ENCODE measurements at regions of chr4 and their contacts with region 1.

Region 1: DNA sequence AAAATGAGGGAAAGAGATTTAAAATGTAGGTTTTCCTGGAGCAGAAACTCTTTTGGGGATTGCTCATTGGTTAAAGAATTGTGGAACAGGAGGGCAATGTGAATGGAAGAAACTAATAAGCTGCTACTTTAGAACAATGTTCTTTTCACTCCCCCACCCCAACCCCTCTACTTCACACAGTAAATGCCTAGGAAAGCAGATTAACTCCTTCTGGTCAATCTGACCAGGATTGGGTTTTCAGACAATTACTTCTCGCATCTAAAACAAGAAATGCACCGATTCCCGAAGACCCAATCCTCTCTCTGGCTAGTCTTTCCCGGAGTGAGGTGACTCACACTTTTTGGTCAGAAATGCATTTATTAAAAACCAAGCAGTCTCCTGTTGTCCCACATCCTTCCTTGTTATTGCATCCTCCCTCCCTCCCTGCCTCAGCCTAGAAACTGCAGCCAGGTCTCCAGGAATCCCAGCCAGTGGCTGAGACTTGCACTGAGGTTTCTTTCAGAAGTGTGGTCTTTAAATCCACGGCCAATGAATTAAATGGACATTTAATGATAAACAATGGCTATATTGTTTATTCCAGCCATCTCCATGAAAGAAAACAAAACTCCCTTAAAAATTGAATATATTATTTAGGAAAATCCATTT is 21.4 kb downstream of the MFAP3L start:
- DNase-seq: no peak
- ATAC-seq: peak; percentile 48
- H3K4me3 ChIP-seq: no peak overlapping the region
- H3K27ac ChIP-seq: peak overlapping the region; percentile 46 to 49
- H3K4me1 ChIP-seq: peaks cover 0 to 20% of the 10 kb centered on the region in 2 donors
- H3K27me3 ChIP-seq: no peaks in the 10 kb centered on the region

Region 2: GRCh38 chr4:169963998-169964397 is 40.8 kb before region 1 on chr4:
- intact Hi-C with region 1: loop called in 1 of 2 experiments (anchors 2 kb)
- DNase-seq: no peak
- ATAC-seq: peak; percentile 48
- H3K4me3 ChIP-seq: no peak overlapping the region
- H3K27ac ChIP-seq: no peak overlapping the region
- H3K4me1 ChIP-seq: peaks cover 2 to 10% of the 10 kb centered on the region in 2 donors
- H3K27me3 ChIP-seq: no peaks in the 10 kb centered on the region

Region 3: GRCh38 chr4:170089668-170090351 is 85.0 kb after region 1 on chr4 and contains the start of gene AADAT:
- intact Hi-C with region 1: no loop called
- DNase-seq: peak; percentile 74 to 93
- ATAC-seq: peak; percentile 95
- H3K4me3 ChIP-seq: peak within 1 kb of the TSS; percentile 75 to 96
- H3K27ac ChIP-seq: peak within 1 kb of the TSS; percentile 23 to 66
- H3K4me1 ChIP-seq: no peaks in the 10 kb centered on the region
- H3K27me3 ChIP-seq: no peaks in the 10 kb centered on the region
- total RNA-seq, gene AADAT: 5.7 to 7.2 TPM